MCF 10A (cell line): ENCODE measurements at regions of chr18 and their contacts with region 1.

Region 1: DNA sequence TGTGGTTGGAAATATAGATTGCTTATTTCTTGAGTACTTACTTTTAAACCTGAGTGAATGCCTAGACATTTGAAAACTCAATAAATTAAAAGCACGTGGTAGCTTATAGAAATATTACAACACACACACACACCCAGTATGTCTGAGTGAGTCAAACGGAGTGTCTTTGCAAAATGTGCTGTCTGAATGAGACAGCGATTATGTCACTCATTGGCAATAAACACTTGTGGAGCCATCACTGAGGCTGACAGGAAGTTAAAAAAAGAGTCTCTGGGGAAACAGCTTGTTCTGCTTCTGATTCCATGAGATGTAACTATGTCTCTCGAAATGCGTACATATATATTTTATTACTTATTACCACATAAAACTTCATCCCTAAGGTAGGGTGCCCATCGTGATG is 22.3 kb upstream of the VPS4B start:
- DNase-seq: peak; percentile 95
- H3K4me3 Mint-ChIP-seq: peak overlapping the region; percentile 46
- H3K27ac Mint-ChIP-seq: peak overlapping the region; percentile 74
- H3K4me1 Mint-ChIP-seq: peaks cover 40% of the 10 kb centered on the region
- H3K27me3 Mint-ChIP-seq: no peaks in the 10 kb centered on the region
- CTCF ChIP-seq: no peak

Region 2: DNA sequence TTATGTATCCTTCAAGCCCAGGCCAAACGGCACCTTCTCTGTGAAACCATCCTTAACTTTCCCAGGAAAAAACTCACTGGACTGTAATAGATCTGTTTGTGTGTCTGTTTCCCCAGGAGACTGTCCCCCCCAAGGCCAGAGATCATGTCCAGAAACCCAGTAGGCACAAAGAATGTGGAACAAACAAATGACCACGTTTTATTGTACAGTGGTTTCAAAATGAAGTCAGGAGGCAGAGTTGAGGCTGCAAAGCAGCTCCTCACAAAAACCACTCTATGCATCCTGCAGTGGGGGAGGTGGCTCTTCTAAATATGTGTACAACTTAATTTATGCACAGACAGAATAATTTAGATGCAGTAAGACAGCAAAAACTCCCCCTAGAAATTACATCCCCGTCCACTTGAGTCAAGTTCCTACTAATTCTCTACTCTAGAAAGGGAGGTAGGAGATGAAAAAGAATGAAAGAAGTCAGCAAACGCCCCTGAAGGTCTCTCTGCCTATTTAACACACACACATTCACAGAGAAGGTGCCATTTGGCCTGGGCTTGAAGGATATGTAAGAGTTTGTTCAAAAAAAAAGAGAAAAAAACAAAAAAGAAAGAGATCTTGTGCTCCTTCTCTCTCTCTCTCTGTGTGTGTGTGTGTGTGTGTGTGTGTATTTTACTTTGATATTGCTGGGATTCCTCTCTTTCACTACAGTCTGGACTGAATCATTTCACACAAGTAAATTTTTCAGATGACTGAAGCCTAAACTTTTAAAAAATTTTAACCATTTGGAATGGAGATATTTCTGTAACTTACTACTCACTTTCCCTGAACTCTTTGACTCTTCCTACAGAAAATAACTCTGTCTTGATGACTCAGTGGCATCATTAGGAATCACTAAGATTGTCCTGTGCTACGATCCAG is 144.5 kb before region 1 on chr18:
- CTCF ChIA-PET with region 1: no interaction called
- POLR2A ChIA-PET with region 1: no interaction called
- intact Hi-C with region 1: no loop called
- DNase-seq: no peak
- H3K4me3 Mint-ChIP-seq: no peak overlapping the region
- H3K27ac Mint-ChIP-seq: no peak overlapping the region
- H3K4me1 Mint-ChIP-seq: no peaks in the 10 kb centered on the region
- H3K27me3 Mint-ChIP-seq: no peaks in the 10 kb centered on the region
- CTCF ChIP-seq: no peak

Region 3: DNA sequence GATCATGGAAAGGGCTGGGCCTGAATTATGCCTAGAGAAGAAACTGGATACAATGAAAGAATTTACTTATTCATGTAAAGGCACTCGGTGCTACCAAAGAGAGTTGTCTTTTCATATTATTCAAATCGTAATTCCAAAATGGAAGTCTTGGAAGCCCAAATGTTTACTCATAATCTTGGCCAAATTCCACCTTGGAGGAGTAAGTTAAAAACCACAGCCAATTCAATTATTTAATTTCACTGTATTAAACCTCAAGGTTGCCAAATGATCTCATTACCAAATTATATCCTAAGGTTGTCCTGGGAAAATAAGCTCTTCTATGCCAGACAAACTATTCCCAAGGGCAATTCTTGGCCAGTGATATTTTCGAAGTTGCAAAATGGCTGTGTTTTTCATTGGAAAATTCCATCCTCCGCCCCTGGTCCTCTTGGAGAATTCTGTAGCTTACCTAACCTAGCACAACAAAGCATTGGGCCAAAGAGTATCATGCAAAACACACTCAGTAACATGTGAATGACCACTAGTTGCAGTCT is 11.2 kb before region 1 on chr18:
- CTCF ChIA-PET with region 1: interaction called, 63 read pairs
- POLR2A ChIA-PET with region 1: interaction called, 264 read pairs
- intact Hi-C with region 1: no loop called
- DNase-seq: peak; percentile 56
- H3K4me3 Mint-ChIP-seq: no peak overlapping the region
- H3K27ac Mint-ChIP-seq: no peak overlapping the region
- H3K4me1 Mint-ChIP-seq: peaks cover 4% of the 10 kb centered on the region
- H3K27me3 Mint-ChIP-seq: no peaks in the 10 kb centered on the region
- CTCF ChIP-seq: no peak

Region 4: DNA sequence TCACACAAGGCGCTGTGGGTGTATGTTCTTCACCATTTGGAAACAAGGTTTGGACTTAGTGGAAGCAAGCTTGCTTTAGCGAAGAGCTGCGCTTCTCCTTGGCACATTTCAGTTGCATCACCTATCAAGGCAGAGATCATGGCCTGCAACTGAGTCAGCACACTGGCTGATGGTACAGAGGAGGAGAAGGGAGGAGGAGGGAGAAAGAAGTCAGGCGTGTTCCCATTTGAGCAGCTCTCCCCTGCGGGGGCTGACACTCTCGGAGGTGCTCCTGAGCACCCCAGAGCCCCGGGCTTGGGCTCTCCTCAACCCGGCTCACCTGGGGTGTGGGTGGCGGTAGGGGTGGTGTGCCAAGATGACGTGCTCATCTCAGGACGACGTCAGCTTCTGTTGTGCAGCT is 26.2 kb after region 1 on chr18:
- CTCF ChIA-PET with region 1: interaction called, 47 read pairs
- POLR2A ChIA-PET with region 1: interaction called, 863 read pairs
- intact Hi-C with region 1: no loop called
- DNase-seq: peak; percentile 93
- H3K4me3 Mint-ChIP-seq: peak overlapping the region; percentile 58
- H3K27ac Mint-ChIP-seq: peak overlapping the region; percentile 87
- H3K4me1 Mint-ChIP-seq: peaks cover 28% of the 10 kb centered on the region
- H3K27me3 Mint-ChIP-seq: no peaks in the 10 kb centered on the region
- CTCF ChIP-seq: no peak

Region 5: GRCh38 chr18:63487676-63488075 is 43.1 kb after region 1 on chr18:
- CTCF ChIA-PET with region 1: interaction called, 8 read pairs
- POLR2A ChIA-PET with region 1: interaction called, 863 read pairs
- intact Hi-C with region 1: no loop called
- DNase-seq: no peak
- H3K4me3 Mint-ChIP-seq: no peak overlapping the region
- H3K27ac Mint-ChIP-seq: peak overlapping the region; percentile 39
- H3K4me1 Mint-ChIP-seq: peaks cover 39% of the 10 kb centered on the region
- H3K27me3 Mint-ChIP-seq: no peaks in the 10 kb centered on the region
- CTCF ChIP-seq: no peak